ENCODE measurements at regions of chr5 and their contacts with region 1.

Region 1: DNA sequence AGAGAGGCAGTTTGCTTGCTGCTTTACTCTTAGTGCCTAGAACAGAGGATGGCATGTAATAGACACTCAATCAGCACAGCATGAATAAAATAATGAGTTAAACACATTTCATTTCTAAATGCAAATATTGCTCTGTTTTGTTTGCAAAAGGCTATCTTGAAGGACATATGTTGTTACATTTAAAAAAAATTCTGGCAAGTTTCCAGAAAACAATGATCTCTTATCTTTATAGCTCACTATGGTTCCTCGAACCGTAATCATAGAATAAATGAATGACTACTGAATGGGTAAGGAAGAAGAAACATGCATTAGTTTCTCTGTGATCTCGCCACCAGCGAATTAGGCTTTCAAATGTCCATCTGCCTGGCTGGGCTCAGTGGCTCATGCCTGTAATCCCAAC is 286.0 kb upstream of the TAS2R1 start:
- DNase-seq: no peak
- ATAC-seq: no peak
- H3K4me3 ChIP-seq: no peak overlapping the region
- H3K27ac ChIP-seq: no peak overlapping the region
- H3K4me1 ChIP-seq: no peaks in the 10 kb centered on the region
- H3K27me3 ChIP-seq: no peaks in the 10 kb centered on the region
- CTCF ChIP-seq: no peak

Region 2: DNA sequence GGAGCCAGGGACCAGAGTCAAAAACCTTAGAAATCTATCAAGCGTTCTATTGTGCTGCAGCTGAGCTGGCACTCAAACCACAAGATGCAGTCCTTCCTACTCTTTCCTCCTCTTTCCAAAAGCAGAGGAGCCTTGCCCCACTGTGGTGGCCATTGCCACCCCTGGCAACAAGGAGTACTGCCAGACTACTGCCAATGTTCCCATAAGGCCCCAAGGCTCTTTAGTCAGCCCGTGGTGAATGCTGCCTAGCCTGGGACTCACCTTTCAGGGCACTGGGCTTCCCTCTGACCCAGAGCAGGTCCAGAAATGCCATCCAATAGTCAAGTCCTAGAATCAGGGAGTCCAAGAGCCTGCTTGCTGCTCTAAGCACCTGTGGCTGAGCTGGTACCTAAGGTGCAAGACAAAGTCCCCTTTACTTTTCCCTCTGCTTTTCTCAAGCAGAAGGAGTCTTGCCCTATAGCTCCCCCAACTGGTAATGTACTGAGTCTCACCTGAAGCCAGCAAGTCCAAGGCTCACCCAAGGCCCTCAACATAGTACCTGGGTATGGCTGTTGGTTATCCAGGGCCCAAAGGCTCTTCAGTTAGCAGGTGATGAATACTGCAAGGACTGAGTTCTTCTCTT is 114.1 kb after region 1 on chr5:
- intact Hi-C with region 1: loop called in 1 of 10 experiments (anchors 10 kb)
- DNase-seq: no peak
- ATAC-seq: no peak
- H3K4me3 ChIP-seq: no peak overlapping the region
- H3K27ac ChIP-seq: no peak overlapping the region
- H3K4me1 ChIP-seq: no peaks in the 10 kb centered on the region
- H3K27me3 ChIP-seq: no peaks in the 10 kb centered on the region
- CTCF ChIP-seq: no peak

Measured in heart right ventricle (tissue), 16 donors.